Activated CD4-positive, alpha-beta T cell treated with anti-CD3 and anti-CD28 coated beads for 36 hours (primary cell): ENCODE measurements at regions of chr6 and their contacts with region 1.

Region 1: GRCh38 chr6:29301401-29301800 is at the start of gene OR14J1:
- DNase-seq: no peak
- ATAC-seq: no peak
- H3K4me3 Mint-ChIP-seq: no peak within 1 kb of the TSS
- H3K27ac Mint-ChIP-seq: no peak within 1 kb of the TSS
- H3K4me1 Mint-ChIP-seq: no peaks in the 10 kb centered on the region
- H3K27me3 Mint-ChIP-seq: peaks cover 24% of the 10 kb centered on the region
- total RNA-seq, gene OR14J1: not detected

Region 2: DNA sequence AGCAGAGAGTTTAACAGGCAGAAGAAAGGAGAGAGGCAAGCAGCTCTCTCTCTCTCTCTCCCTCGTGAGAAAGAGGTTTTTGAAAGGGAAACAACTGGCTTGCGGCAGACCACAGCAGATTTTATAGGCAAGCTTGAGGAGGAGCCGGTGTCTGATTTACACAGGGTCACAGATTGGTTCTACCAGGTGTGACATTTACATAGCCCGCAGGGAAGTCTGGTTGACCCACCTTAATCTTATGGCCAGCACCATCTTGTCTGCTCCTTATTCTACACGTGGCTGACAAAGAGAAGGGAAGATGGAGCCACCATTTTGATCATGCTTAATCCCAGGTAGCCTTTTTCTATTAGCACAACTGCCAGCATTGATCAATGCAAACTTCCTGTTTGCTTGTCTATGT is 65.3 kb before region 1 on chr6:
- CTCF ChIA-PET with region 1: no interaction called
- POLR2A ChIA-PET with region 1: no interaction called
- intact Hi-C with region 1: loop called in 1 of 2 experiments (anchors 10 kb)
- DNase-seq: no peak
- ATAC-seq: no peak
- H3K4me3 Mint-ChIP-seq: no peak overlapping the region
- H3K27ac Mint-ChIP-seq: no peak overlapping the region
- H3K4me1 Mint-ChIP-seq: peaks cover 2% of the 10 kb centered on the region
- H3K27me3 Mint-ChIP-seq: peaks cover 21% of the 10 kb centered on the region

Region 3: GRCh38 chr6:29376003-29376402 is 74.6 kb after region 1 on chr6:
- CTCF ChIA-PET with region 1: no interaction called
- POLR2A ChIA-PET with region 1: no interaction called
- intact Hi-C with region 1: no loop called
- DNase-seq: no peak
- ATAC-seq: no peak
- H3K4me3 Mint-ChIP-seq: no peak overlapping the region
- H3K27ac Mint-ChIP-seq: no peak overlapping the region
- H3K4me1 Mint-ChIP-seq: no peaks in the 10 kb centered on the region
- H3K27me3 Mint-ChIP-seq: peaks cover 25% of the 10 kb centered on the region

Region 4: DNA sequence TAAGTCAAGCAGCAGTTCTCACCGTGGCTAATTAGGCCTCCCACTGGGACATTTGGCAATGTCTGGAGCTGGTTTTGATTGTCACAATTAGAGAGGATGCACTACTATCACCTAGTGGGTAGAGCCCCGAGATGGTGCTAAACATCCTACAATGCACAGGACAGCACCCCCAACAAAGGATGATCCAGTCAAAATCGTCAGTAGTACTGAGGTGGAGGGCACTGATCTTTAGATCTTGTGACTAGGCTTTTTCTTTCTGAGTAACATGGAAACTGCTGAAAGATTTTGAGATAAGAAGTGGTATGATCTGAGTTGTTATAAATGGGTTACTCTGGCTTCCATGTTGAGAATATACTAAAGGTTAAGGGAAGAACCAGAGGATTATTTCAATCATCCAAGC is 246.2 kb after region 1 on chr6:
- CTCF ChIA-PET with region 1: no interaction called
- POLR2A ChIA-PET with region 1: no interaction called
- intact Hi-C with region 1: no loop called
- DNase-seq: peak; percentile 32
- ATAC-seq: peak; percentile 92
- H3K4me3 Mint-ChIP-seq: no peak overlapping the region
- H3K27ac Mint-ChIP-seq: no peak overlapping the region
- H3K4me1 Mint-ChIP-seq: peaks cover 12% of the 10 kb centered on the region
- H3K27me3 Mint-ChIP-seq: peaks cover 47% of the 10 kb centered on the region